Activated CD8-positive, alpha-beta T cell treated with anti-CD3 and anti-CD28 coated beads for 36 hours (primary cell): ENCODE measurements at regions of chr5 and their contacts with region 1.

Region 1: DNA sequence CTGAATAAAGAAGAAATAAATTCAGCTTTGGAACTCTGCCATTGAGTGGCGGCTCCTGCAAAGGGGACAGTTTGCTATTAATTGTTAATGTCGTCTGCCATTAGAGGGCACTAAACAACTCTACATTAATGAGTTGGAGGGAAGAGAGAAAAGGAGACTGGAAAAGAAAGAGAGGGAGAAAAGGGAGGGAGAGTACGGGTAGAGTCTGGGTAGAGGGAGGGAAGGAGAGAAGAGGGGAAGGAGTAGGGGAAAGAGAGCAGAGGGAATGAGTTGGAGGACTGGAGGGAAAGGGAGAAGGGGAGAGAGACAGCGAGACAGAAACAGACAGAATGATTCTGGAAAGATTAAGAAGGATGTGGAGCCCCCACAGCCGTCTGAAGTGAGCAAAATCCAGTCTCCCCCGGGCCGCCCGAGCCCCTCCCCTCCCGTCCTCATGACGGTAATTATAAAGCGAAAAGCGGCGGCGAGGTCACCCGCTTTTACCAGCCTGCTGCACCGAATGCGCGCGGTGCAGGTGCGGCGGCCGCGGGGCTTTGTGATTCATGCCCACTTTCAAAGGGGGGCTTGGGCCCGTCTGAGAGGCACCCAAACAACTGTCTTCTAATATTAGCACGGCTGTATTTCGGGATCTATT is 1.9 kb upstream of the FST start:
- DNase-seq: peak; percentile 45
- ATAC-seq: peak; percentile 5
- H3K4me3 Mint-ChIP-seq: peak overlapping the region; percentile 79
- H3K27ac Mint-ChIP-seq: no peak overlapping the region
- H3K4me1 Mint-ChIP-seq: peaks cover 31% of the 10 kb centered on the region
- H3K27me3 Mint-ChIP-seq: peaks cover 50% of the 10 kb centered on the region
- CTCF ChIP-seq: peak; percentile 69

Region 2: DNA sequence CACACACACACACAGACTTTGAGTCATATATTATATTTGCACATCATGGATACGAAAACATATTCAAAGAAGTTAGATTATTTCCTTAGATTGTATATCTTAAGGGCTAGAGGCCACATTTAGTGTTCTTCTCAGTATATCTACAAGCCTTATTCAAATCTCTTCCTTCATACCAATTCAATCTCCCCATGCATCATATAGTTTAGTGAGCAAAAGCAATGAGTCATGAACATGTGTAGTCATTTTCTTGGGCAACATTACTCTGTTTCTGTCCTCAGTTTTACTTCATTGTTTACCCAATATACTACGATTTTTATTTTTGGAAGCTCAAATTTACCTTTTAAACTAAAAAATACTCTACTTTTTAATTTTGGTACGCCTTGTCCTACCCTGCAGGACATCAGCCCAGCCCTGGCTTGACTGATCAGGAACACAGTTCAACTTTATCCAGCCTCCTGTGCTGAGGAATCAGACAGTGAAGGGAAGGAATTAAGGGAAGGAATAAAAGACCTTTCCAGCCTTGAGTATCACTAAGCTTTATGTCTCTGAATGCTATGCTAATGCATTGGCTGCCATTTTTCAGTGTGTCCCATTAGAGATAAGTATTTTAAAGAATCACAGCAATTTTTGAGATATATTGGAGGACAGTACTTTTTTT is 99.8 kb before region 1 on chr5:
- CTCF ChIA-PET with region 1: no interaction called
- POLR2A ChIA-PET with region 1: no interaction called
- intact Hi-C with region 1: no loop called
- DNase-seq: no peak
- ATAC-seq: no peak
- H3K4me3 Mint-ChIP-seq: no peak overlapping the region
- H3K27ac Mint-ChIP-seq: no peak overlapping the region
- H3K4me1 Mint-ChIP-seq: peaks cover 3% of the 10 kb centered on the region
- H3K27me3 Mint-ChIP-seq: peaks cover 2% of the 10 kb centered on the region
- CTCF ChIP-seq: no peak

Region 3: GRCh38 chr5:53463909-53464621 is 14.5 kb before region 1 on chr5:
- CTCF ChIA-PET with region 1: interaction called, 13 read pairs
- POLR2A ChIA-PET with region 1: no interaction called
- intact Hi-C with region 1: no loop called
- DNase-seq: no peak
- ATAC-seq: no peak
- H3K4me3 Mint-ChIP-seq: no peak overlapping the region
- H3K27ac Mint-ChIP-seq: no peak overlapping the region
- H3K4me1 Mint-ChIP-seq: no peaks in the 10 kb centered on the region
- H3K27me3 Mint-ChIP-seq: peaks cover 24% of the 10 kb centered on the region
- CTCF ChIP-seq: no peak

Region 4: DNA sequence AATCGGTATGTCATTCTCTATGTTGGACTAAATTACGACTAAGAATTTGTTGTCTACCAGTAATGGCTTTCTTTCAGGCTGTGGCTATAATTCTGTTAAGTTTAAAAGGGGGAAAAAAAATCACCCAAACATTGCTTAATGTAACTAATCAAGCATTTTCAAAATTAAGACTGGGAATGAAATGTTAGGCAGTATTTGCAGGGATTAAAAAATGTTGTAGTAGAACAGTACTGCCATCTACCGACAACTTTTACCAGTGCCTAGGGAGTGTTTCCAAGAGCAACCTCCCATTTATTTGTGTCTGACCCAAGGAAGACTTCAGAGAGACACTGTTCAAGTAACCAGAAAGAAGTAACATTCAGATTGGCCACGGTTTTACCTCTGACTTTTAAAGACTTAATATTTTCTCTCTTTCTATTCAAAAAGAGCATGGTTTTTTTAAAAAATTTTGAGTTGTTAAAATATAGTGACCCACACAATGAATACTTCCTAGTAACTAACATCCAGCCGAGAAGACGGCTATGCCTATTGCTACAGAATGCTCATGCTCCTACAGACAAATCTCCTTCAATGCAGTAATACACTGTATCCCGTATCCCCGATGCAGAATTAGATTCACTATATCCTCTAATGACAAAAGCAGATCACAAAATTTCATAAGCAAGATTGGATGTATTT is 739.4 kb after region 1 on chr5:
- CTCF ChIA-PET with region 1: interaction called, 4 read pairs
- POLR2A ChIA-PET with region 1: interaction called, 3 read pairs
- intact Hi-C with region 1: loop called (anchors 5 kb)
- DNase-seq: peak; percentile 14
- ATAC-seq: peak; percentile 61
- H3K4me3 Mint-ChIP-seq: no peak overlapping the region
- H3K27ac Mint-ChIP-seq: no peak overlapping the region
- H3K4me1 Mint-ChIP-seq: peaks cover 7% of the 10 kb centered on the region
- H3K27me3 Mint-ChIP-seq: no peaks in the 10 kb centered on the region
- CTCF ChIP-seq: peak; percentile 78

Region 5: GRCh38 chr5:54234304-54234933 is 755.9 kb after region 1 on chr5:
- CTCF ChIA-PET with region 1: interaction called, 14 read pairs
- POLR2A ChIA-PET with region 1: no interaction called
- intact Hi-C with region 1: loop called (anchors 5 kb)
- DNase-seq: no peak
- ATAC-seq: no peak
- H3K4me3 Mint-ChIP-seq: no peak overlapping the region
- H3K27ac Mint-ChIP-seq: no peak overlapping the region
- H3K4me1 Mint-ChIP-seq: peaks cover 2% of the 10 kb centered on the region
- H3K27me3 Mint-ChIP-seq: no peaks in the 10 kb centered on the region
- CTCF ChIP-seq: peak; percentile 57